Activated CD8-positive, alpha-beta memory T cell treated with anti-CD3 and anti-CD28 coated beads, Interleukin-2, amount 10 ng/mL, durations not matched to agents 7 days and 5 days (primary cell): ENCODE measurements at regions of chr5 and their contacts with region 1.

Region 1: DNA sequence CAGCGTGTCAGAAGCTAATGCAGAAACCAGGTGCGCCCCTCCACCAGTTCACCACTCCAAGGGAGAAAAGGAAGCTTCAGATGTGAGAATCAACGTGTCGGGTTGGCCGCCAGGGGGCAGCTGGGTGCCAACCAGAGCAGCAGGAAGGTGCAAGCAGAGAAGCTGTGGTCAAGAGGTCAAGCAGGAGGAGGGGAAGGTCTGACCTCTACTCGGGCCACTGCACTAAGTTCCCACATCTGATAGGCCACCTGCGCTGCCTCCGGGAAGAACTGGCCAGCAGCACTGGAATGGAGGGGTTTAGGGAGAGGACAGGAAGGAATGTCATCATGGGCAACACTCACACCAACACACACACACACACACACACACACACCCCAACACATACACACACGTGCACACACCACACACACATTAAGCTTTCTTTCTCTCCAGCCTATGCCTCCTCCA is 31.4 kb downstream of the ANXA6 start:
- DNase-seq: peak; percentile 75
- ATAC-seq: peak; percentile 63
- H3K4me3 Mint-ChIP-seq: no peak overlapping the region
- H3K27ac Mint-ChIP-seq: peak overlapping the region; percentile 75
- H3K4me1 Mint-ChIP-seq: peaks cover 39% of the 10 kb centered on the region
- H3K27me3 Mint-ChIP-seq: no peaks in the 10 kb centered on the region

Region 2: DNA sequence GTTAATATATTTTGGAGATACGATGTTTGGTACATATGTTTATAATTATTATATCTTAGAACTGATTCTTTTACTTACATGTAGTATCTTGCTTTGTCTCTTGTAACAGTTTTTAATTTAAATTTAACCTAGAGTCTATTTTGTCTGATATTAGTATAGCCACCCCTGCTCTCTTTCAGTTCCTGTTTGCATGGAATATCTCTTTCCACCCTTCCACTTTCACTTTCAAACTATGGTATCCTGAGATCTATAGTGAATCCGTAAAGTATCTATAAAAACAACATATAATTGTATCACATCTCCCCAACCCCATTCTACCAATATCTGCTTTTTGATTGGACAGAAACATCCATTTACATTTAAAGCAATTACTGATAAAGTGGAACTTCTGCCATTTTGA is 272.7 kb before region 1 on chr5:
- CTCF ChIA-PET with region 1: no interaction called
- DNase-seq: no peak
- ATAC-seq: no peak
- H3K4me3 Mint-ChIP-seq: no peak overlapping the region
- H3K27ac Mint-ChIP-seq: no peak overlapping the region
- H3K4me1 Mint-ChIP-seq: peaks cover 10% of the 10 kb centered on the region
- H3K27me3 Mint-ChIP-seq: no peaks in the 10 kb centered on the region

Region 3: GRCh38 chr5:151020304-151021110 is 105.7 kb before region 1 on chr5 and contains the start of gene GPX3:
- CTCF ChIA-PET with region 1: no interaction called
- DNase-seq: no peak
- ATAC-seq: peak; percentile 18
- H3K4me3 Mint-ChIP-seq: no peak within 1 kb of the TSS
- H3K27ac Mint-ChIP-seq: no peak within 1 kb of the TSS
- H3K4me1 Mint-ChIP-seq: peaks cover 8% of the 10 kb centered on the region
- H3K27me3 Mint-ChIP-seq: peaks cover 14% of the 10 kb centered on the region
- total RNA-seq, gene GPX3: not detected

Region 4: GRCh38 chr5:151150471-151151262 is 24.4 kb after region 1 on chr5:
- CTCF ChIA-PET with region 1: interaction called, 205 read pairs
- DNase-seq: peak; percentile 92
- ATAC-seq: peak; percentile 74
- H3K4me3 Mint-ChIP-seq: peak overlapping the region; percentile 62
- H3K27ac Mint-ChIP-seq: peak overlapping the region; percentile 89
- H3K4me1 Mint-ChIP-seq: peaks cover 86% of the 10 kb centered on the region
- H3K27me3 Mint-ChIP-seq: no peaks in the 10 kb centered on the region

Region 5: GRCh38 chr5:151164686-151165392 is 38.6 kb after region 1 on chr5:
- CTCF ChIA-PET with region 1: interaction called, 260 read pairs
- DNase-seq: peak; percentile 86
- ATAC-seq: peak; percentile 98
- H3K4me3 Mint-ChIP-seq: no peak overlapping the region
- H3K27ac Mint-ChIP-seq: no peak overlapping the region
- H3K4me1 Mint-ChIP-seq: peaks cover 4% of the 10 kb centered on the region
- H3K27me3 Mint-ChIP-seq: no peaks in the 10 kb centered on the region

Region 6: GRCh38 chr5:151223469-151224264 is 97.4 kb after region 1 on chr5 and contains the start of gene CCDC69:
- CTCF ChIA-PET with region 1: interaction called, 13 read pairs
- DNase-seq: peak; percentile 76
- ATAC-seq: peak; percentile 77
- H3K4me3 Mint-ChIP-seq: peak within 1 kb of the TSS; percentile 93
- H3K27ac Mint-ChIP-seq: peak within 1 kb of the TSS; percentile 91
- H3K4me1 Mint-ChIP-seq: peaks cover 52% of the 10 kb centered on the region
- H3K27me3 Mint-ChIP-seq: no peaks in the 10 kb centered on the region
- total RNA-seq, gene CCDC69: 73.1 to 89.1 TPM